ENCODE measurements at regions of chr10 and their contacts with region 1.

Region 1: GRCh38 chr10:127906548-127907377 is at the start of gene PTPRE:
- DNase-seq: peak; percentile 83 to 91 (median 84)
- ATAC-seq: peak; percentile 53 to 90 (median 79)
- H3K4me3 ChIP-seq: peak within 1 kb of the TSS; percentile 58 to 92 (median 76)
- H3K27ac ChIP-seq: peak within 1 kb of the TSS; percentile 85 to 98 (median 91)
- H3K4me1 ChIP-seq: peaks cover 0 to 47% (median 29%) of the 10 kb centered on the region in 12 donors
- H3K27me3 ChIP-seq: no peaks in the 10 kb centered on the region
- CTCF ChIP-seq: peak; percentile 55 to 96 (median 84)
- POLR2A ChIP-seq: no peak
- total RNA-seq, gene PTPRE: 13.9 to 55.0 (median 26.8) TPM

Region 2: GRCh38 chr10:127968027-127968441 is 61.3 kb after region 1 on chr10:
- intact Hi-C with region 1: loop called in 2 of 10 experiments (anchors 5 kb)
- DNase-seq: no peak
- ATAC-seq: peak in 3 of 4 donors; percentile 6 to 40 (median 24)
- H3K4me3 ChIP-seq: no peak overlapping the region
- H3K27ac ChIP-seq: peak overlapping the region; percentile 33 to 85 (median 72)
- H3K4me1 ChIP-seq: peaks cover 0 to 33% (median 17%) of the 10 kb centered on the region in 12 donors
- H3K27me3 ChIP-seq: no peaks in the 10 kb centered on the region
- CTCF ChIP-seq: no peak
- POLR2A ChIP-seq: no peak

Region 3: GRCh38 chr10:128001849-128002248 is 95.1 kb after region 1 on chr10:
- intact Hi-C with region 1: loop called in 1 of 10 experiments (anchors 2 kb)
- DNase-seq: no peak
- ATAC-seq: peak; percentile 57 to 82 (median 63)
- H3K4me3 ChIP-seq: no peak overlapping the region
- H3K27ac ChIP-seq: peak overlapping the region in 9 of 12 donors; percentile 22 to 79 (median 61)
- H3K4me1 ChIP-seq: peaks cover 0 to 57% (median 34%) of the 10 kb centered on the region in 12 donors
- H3K27me3 ChIP-seq: no peaks in the 10 kb centered on the region
- CTCF ChIP-seq: no peak
- POLR2A ChIP-seq: no peak

Region 4: DNA sequence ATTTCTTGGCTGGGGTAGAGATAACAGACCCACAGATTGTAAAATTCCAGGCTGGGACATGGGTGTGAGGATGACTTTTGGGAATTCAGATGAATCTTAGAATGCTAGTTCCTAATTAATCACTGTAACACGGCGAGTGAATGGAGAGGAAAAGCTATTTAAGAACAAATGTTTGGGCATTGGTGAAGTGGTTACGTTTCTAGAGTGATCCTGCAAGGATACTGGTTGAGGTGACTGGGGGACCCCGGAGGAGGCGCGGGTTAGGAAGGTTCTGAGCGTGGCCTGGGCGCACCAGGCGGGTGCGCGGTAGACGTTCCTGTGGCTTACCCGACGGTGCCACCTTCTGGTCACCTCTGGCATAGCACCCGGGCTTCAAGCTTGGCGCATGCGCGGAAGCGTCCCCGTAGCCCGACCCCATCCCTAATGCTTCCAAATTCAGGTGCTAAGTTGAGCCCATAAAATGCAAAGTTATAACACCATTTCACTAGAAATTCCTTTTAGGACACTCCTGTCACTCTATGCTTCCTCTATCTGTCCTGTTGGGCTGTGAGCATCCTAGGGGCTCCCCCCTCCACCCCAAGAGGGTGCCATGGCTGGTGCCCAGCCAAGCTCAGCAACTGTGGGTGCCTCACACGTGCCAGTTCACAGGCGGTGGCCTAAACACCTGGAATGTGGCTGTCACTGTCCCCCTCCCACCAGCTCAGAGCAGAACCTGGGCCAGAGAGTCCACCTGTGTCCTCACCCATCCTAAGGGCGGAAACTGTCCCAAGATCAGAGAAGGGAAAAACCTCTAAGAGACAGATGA is 104.6 kb after region 1 on chr10:
- intact Hi-C with region 1: loop called (anchors 1 to 2 kb)
- DNase-seq: peak; percentile 83 to 93 (median 86)
- ATAC-seq: peak; percentile 73 to 88 (median 86)
- H3K4me3 ChIP-seq: peak overlapping the region in 2 of 12 donors; percentile 1 to 2
- H3K27ac ChIP-seq: peak overlapping the region in 1 of 12 donors; percentile 39
- H3K4me1 ChIP-seq: peaks cover 0 to 31% (median 17%) of the 10 kb centered on the region in 12 donors
- H3K27me3 ChIP-seq: no peaks in the 10 kb centered on the region
- CTCF ChIP-seq: peak; percentile 98 to 100 (median 99)
- POLR2A ChIP-seq: no peak

Region 5: GRCh38 chr10:128064108-128064969 is 157.6 kb after region 1 on chr10:
- intact Hi-C with region 1: loop called in 8 of 10 experiments (anchors 1 to 5 kb)
- DNase-seq: peak; percentile 65 to 81 (median 79)
- ATAC-seq: peak; percentile 60 to 79 (median 70)
- H3K4me3 ChIP-seq: peak overlapping the region in 1 of 12 donors; percentile 15
- H3K27ac ChIP-seq: peak overlapping the region; percentile 31 to 95 (median 68)
- H3K4me1 ChIP-seq: peaks cover 0 to 71% (median 27%) of the 10 kb centered on the region in 12 donors
- H3K27me3 ChIP-seq: no peaks in the 10 kb centered on the region
- CTCF ChIP-seq: no peak
- POLR2A ChIP-seq: no peak

Region 6: GRCh38 chr10:128069351-128070051 is 162.7 kb after region 1 on chr10:
- intact Hi-C with region 1: loop called (anchors 1 to 5 kb)
- DNase-seq: peak; percentile 70 to 85 (median 83)
- ATAC-seq: peak; percentile 50 to 68 (median 66)
- H3K4me3 ChIP-seq: no peak overlapping the region
- H3K27ac ChIP-seq: no peak overlapping the region
- H3K4me1 ChIP-seq: peaks cover 0 to 31% (median 2%) of the 10 kb centered on the region in 12 donors
- H3K27me3 ChIP-seq: no peaks in the 10 kb centered on the region
- CTCF ChIP-seq: peak; percentile 74 to 88 (median 84)
- POLR2A ChIP-seq: no peak

Region 7: DNA sequence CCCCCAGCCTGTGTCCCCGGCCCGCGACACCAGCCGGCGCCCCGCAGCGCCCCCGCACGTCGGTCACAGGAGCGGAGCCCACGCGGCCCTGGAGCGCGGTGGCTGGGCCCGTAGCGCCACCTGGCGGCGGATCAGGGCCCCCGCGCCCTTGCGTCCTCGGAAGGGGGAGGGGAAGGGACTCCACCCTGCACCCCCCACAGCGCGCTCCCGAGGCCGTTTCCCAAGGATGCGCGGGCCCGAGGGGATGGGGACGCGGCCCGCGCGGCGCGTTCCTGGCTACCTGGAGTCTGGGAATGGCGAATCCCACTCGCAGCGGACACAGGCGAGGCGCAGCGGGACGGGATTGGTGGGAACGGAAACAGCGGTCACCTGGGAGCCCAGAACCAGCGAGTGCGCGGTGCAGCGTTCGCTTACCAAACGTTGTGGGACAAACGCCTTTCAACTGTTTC is 243.3 kb after region 1 on chr10:
- intact Hi-C with region 1: loop called in 2 of 10 experiments (anchors 5 to 10 kb)
- DNase-seq: peak; percentile 50 to 87 (median 61)
- ATAC-seq: peak; percentile 58 to 97 (median 96)
- H3K4me3 ChIP-seq: peak overlapping the region in 11 of 12 donors; percentile 22 to 65 (median 50)
- H3K27ac ChIP-seq: no peak overlapping the region
- H3K4me1 ChIP-seq: peaks cover 0 to 12% (median 3%) of the 10 kb centered on the region in 12 donors
- H3K27me3 ChIP-seq: peaks cover 0 to 38% (median 10%) of the 10 kb centered on the region in 9 donors
- CTCF ChIP-seq: peak; percentile 68 to 87 (median 76)
- POLR2A ChIP-seq: no peak

Measured in heart left ventricle (tissue), 16 donors.